ENCODE measurements at regions of chr5 and their contacts with region 1.

Region 1: GRCh38 chr5:39547553-39548154 is 122.9 kb upstream of the DAB2 start:
- DNase-seq: peak; percentile 57
- H3K4me3 ChIP-seq: no peak overlapping the region
- H3K27ac ChIP-seq: no peak overlapping the region
- H3K4me1 ChIP-seq: peaks cover 12% of the 10 kb centered on the region
- H3K27me3 ChIP-seq: no peaks in the 10 kb centered on the region
- CTCF ChIP-seq: peak; percentile 65 to 72 (median 71)
- POLR2A ChIP-seq: no peak

Region 2: GRCh38 chr5:39376293-39376714 is 171.3 kb before region 1 on chr5:
- intact Hi-C with region 1: loop called (anchors 10 kb)
- DNase-seq: peak; percentile 55
- H3K4me3 ChIP-seq: no peak overlapping the region
- H3K27ac ChIP-seq: no peak overlapping the region
- H3K4me1 ChIP-seq: no peaks in the 10 kb centered on the region
- H3K27me3 ChIP-seq: no peaks in the 10 kb centered on the region
- CTCF ChIP-seq: peak; percentile 27 to 70 (median 57)
- POLR2A ChIP-seq: no peak